Common myeloid progenitor, CD34-positive (primary cell): ENCODE measurements at regions of chr21 and their contacts with region 1.

Region 1: DNA sequence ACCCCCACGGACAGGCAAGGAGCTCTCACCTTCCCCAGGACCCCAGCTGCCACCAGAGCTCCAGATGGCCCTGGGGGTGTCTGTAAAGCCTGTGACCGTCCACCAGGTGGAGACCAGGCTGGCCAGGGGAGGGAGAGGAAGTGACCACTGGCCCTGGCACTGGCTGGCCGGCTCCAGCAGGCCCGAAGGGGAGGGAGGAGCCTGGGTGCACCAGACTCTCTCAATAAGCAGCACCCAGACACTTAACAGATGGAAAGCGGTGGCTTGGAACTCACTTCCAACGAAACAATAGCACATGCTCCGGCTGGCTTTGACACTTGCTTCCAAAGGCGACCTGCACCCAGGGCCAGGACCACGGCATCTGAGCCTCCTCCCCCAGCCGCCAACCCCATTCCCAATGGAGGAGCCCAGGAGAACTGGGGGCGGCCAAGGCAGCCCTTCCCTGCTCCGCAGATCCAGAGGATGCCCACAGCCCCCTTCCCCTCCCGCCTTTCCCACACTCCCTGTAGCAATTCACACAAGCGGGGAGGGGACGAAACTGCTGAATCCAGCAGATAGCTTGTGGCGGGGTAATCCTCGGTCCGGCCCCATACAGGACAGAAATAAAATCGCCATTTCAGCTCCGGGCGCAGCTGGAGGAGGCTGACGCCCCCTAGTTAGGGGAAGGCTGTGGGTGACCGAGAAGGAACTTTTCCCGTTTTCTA is 742 bp upstream of the PDE9A start:
- DNase-seq: no peak
- H3K4me3 ChIP-seq: peak overlapping the region in 6 of 7 experiments; percentile 23 to 67 (median 48)
- H3K27ac ChIP-seq: no peak overlapping the region
- H3K4me1 ChIP-seq: peaks cover 0 to 29% (median 24%) of the 10 kb centered on the region in 4 experiments
- H3K27me3 ChIP-seq: peaks cover 0 to 47% (median 14%) of the 10 kb centered on the region in 5 experiments

Region 2: GRCh38 chr21:42641311-42642218 is 11.1 kb before region 1 on chr21:
- CTCF ChIA-PET with region 1: interaction called, 13 read pairs
- POLR2A ChIA-PET with region 1: no interaction called
- DNase-seq: peak in 1 of 3 donors; percentile 26
- H3K4me3 ChIP-seq: no peak overlapping the region
- H3K27ac ChIP-seq: no peak overlapping the region
- H3K4me1 ChIP-seq: peaks cover 0 to 21% (median 8%) of the 10 kb centered on the region in 4 experiments
- H3K27me3 ChIP-seq: no peaks in the 10 kb centered on the region

Region 3: DNA sequence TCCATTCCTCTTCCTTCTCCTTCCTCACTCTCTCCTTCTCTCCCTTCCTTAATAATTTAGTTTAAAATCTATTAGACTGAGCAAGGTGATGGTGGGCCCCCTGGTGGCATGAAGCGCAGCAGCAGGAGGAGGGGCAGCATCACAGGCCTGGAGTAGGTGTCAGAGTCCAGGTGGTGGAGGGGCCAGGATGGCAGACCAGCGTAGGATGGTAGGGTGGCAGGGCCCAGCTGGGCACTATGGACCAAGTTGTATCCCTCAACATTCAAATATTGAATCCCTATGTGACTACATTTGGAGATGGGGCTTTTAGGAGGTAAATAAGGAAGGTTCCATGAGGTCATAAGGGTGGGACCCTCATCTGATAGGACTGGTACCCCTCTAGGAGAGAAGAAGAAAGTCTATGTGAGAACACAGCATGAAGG is 165.7 kb after region 1 on chr21:
- CTCF ChIA-PET with region 1: interaction called, 11 read pairs
- POLR2A ChIA-PET with region 1: interaction called, 8 read pairs
- DNase-seq: peak; percentile 54 to 68 (median 56)
- H3K4me3 ChIP-seq: no peak overlapping the region
- H3K27ac ChIP-seq: no peak overlapping the region
- H3K4me1 ChIP-seq: peaks cover 0 to 5% (median 3%) of the 10 kb centered on the region in 4 experiments
- H3K27me3 ChIP-seq: no peaks in the 10 kb centered on the region